Dendritic cell treated with granulocyte-macrophage colony-stimulating factor and Interleukin-4, amounts not matched to agents 40 ng/mL and 50 ng/mL, for 4 days (primary cell): ENCODE measurements at regions of chr1 and their contacts with region 1.

Region 1: GRCh38 chr1:52225174-52225573 is 83.3 kb downstream of the ZFYVE9 start:
- H3K4me3 Mint-ChIP-seq: no peak overlapping the region
- H3K27ac Mint-ChIP-seq: no peak overlapping the region
- H3K4me1 Mint-ChIP-seq: no peaks in the 10 kb centered on the region
- H3K27me3 Mint-ChIP-seq: peaks cover 99% of the 10 kb centered on the region

Region 2: GRCh38 chr1:52264530-52265115 is 39.4 kb after region 1 on chr1:
- intact Hi-C with region 1: loop called (anchors 5 kb)
- H3K4me3 Mint-ChIP-seq: no peak overlapping the region
- H3K27ac Mint-ChIP-seq: no peak overlapping the region
- H3K4me1 Mint-ChIP-seq: peaks cover 7% of the 10 kb centered on the region
- H3K27me3 Mint-ChIP-seq: peaks cover 81% of the 10 kb centered on the region